ENCODE measurements at regions of chr10 and their contacts with region 1.

Region 1: DNA sequence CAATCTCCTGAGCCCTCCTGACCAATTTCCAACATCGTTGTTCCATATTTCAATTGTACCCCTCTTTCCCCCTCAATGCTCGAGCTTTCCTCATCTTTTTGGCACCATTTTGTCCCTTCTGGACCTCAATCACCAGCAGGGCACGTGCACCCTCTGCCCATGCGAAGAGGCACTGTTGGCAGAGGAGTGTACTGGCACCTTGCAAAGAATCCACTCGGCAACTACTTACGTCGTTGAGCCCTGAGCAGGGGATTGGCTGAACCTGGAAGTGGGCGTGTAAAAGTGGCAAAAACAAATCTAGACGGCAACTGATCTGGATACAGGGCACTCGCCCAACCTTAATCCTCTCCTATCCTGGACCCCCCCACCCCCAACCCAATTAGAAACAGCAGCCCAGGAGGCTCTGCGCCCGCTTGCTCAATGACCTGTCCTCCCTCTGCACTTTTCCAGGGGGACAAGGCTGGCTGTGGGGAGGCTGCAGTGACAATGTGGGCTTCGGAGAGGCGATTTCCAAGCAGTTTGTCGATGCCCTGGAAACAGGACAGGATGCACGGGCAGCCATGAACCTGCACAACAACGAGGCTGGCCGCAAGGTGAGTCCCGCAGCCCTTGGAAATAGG is 18.8 kb downstream of the WNT8B start:
- DNase-seq: peak; percentile 96
- ATAC-seq: peak; percentile 98
- H3K4me3 Mint-ChIP-seq: peak overlapping the region; percentile 77
- H3K27ac Mint-ChIP-seq: no peak overlapping the region
- H3K4me1 Mint-ChIP-seq: peaks cover 10% of the 10 kb centered on the region
- H3K27me3 Mint-ChIP-seq: peaks cover 18% of the 10 kb centered on the region
- CTCF ChIP-seq: no peak

Region 2: GRCh38 chr10:100122780-100123179 is 358.8 kb before region 1 on chr10:
- CTCF ChIA-PET with region 1: no interaction called
- POLR2A ChIA-PET with region 1: no interaction called
- intact Hi-C with region 1: no loop called
- DNase-seq: no peak
- ATAC-seq: no peak
- H3K4me3 Mint-ChIP-seq: no peak overlapping the region
- H3K27ac Mint-ChIP-seq: no peak overlapping the region
- H3K4me1 Mint-ChIP-seq: peaks cover 7% of the 10 kb centered on the region
- H3K27me3 Mint-ChIP-seq: no peaks in the 10 kb centered on the region
- CTCF ChIP-seq: no peak

Region 3: DNA sequence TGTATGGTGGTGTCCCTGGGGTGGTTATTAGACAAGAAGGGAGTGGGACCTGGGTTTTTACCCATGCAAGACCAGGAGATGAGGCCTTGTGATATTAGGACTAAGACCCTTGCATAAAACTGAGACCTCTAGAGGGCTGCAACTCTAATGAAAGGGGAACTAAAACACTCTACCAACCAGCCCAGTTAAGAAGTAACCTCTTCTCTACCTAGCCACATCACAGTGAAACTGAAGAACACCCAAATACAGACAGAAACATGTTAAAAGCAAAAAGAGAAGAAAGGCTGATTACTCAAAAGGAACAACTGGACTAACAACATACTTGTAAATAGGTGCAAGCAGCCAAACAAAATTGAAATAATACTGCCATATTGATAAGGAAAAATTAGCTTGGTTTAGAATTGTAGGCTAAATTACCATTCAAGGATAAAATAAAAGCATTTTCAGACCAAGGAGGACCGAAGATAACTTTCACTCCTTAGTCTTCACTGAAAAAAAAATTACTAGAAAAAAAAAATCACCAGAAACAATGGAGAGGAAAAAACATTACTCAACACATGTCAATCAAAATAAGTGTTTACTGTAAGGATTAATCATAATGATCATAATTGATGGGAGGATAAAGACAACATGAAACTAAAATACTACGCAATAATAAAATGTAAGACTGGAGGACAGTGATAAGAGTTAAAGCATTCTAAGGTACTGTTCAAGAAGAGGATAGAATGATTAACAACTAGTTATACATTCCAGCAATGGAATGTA is 323.3 kb before region 1 on chr10:
- CTCF ChIA-PET with region 1: no interaction called
- POLR2A ChIA-PET with region 1: no interaction called
- intact Hi-C with region 1: no loop called
- DNase-seq: no peak
- ATAC-seq: no peak
- H3K4me3 Mint-ChIP-seq: no peak overlapping the region
- H3K27ac Mint-ChIP-seq: no peak overlapping the region
- H3K4me1 Mint-ChIP-seq: peaks cover 27% of the 10 kb centered on the region
- H3K27me3 Mint-ChIP-seq: no peaks in the 10 kb centered on the region
- CTCF ChIP-seq: no peak

Region 4: DNA sequence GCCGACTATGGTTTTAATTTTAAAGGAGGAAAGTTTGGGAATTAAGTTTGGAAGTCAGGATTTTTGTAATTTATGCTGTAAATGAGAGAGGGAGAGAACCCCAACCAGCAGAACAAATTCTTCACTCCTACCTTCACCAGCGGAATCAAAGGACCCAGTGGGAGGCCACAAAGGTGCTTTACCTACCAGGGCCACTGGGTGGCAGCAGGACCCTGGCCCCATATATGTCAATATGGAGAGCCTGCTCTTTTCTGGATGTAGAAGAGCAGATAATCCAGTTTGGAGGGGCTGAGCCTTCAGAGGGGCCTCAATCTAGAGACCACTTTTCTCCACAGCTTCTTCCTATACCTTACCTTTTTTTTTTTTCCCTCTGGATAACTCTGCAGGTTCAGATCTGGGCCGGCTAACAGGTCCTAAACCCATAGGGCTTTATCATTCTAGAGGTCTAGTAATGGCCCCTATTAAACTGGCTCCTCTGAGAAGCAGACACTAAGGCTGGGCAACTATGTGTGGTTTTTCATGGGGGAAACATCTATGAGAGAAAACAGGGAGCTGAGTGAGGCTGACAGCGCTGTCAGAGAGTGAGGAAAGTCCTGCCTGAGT is 143.0 kb before region 1 on chr10:
- CTCF ChIA-PET with region 1: interaction called, 10 read pairs
- POLR2A ChIA-PET with region 1: no interaction called
- intact Hi-C with region 1: no loop called
- DNase-seq: peak; percentile 90
- ATAC-seq: peak; percentile 92
- H3K4me3 Mint-ChIP-seq: no peak overlapping the region
- H3K27ac Mint-ChIP-seq: peak overlapping the region; percentile 44
- H3K4me1 Mint-ChIP-seq: peaks cover 2% of the 10 kb centered on the region
- H3K27me3 Mint-ChIP-seq: peaks cover 1% of the 10 kb centered on the region
- CTCF ChIP-seq: peak; percentile 91

Region 5: GRCh38 chr10:100438674-100439315 is 42.8 kb before region 1 on chr10:
- CTCF ChIA-PET with region 1: interaction called, 25 read pairs
- POLR2A ChIA-PET with region 1: no interaction called
- intact Hi-C with region 1: no loop called
- DNase-seq: no peak
- ATAC-seq: no peak
- H3K4me3 Mint-ChIP-seq: no peak overlapping the region
- H3K27ac Mint-ChIP-seq: no peak overlapping the region
- H3K4me1 Mint-ChIP-seq: peaks cover 2% of the 10 kb centered on the region
- H3K27me3 Mint-ChIP-seq: no peaks in the 10 kb centered on the region
- CTCF ChIP-seq: no peak

Region 6: DNA sequence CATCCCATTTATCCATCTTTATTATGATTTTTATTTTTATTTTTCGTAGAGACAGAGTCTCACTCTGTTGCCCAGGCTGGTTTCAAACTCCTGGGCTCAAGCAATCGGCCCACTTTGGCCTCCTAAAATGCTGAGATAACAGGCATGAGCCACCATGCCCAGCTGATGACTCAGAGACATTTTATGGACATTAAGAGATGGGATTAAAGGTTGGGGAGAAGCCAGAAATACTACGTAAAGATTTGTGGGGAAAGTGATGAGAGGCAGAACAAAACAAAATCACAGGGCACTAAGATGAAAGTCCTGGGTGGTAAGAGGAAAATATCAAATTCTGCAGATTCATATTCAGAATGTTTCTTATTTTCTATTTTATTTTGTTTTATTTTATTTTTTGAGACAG is 11.2 kb before region 1 on chr10:
- CTCF ChIA-PET with region 1: interaction called, 30 read pairs
- POLR2A ChIA-PET with region 1: no interaction called
- intact Hi-C with region 1: no loop called
- DNase-seq: no peak
- ATAC-seq: no peak
- H3K4me3 Mint-ChIP-seq: no peak overlapping the region
- H3K27ac Mint-ChIP-seq: no peak overlapping the region
- H3K4me1 Mint-ChIP-seq: no peaks in the 10 kb centered on the region
- H3K27me3 Mint-ChIP-seq: peaks cover 3% of the 10 kb centered on the region
- CTCF ChIP-seq: no peak

Region 7: DNA sequence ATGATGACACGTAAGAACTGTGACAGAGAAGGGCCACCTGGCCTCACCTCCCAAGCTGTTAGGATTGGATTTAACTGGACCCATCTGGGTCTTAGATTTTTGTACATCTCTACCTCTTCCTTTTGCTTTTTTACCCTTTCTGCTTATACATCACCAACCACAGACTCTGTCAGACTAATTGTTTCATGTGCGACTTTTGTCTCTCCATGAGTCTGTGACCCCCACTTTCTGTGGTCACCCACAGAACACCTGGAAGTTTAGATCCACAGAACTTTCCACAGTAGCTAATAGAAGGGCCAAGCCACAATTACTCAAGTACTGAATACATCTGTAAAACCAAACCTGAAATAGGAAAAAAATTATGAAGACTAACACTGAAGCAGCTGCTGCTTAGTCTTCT is 15.0 kb after region 1 on chr10:
- CTCF ChIA-PET with region 1: interaction called, 132 read pairs
- POLR2A ChIA-PET with region 1: interaction called, 56 read pairs
- intact Hi-C with region 1: no loop called
- DNase-seq: peak; percentile 50
- ATAC-seq: peak; percentile 60
- H3K4me3 Mint-ChIP-seq: no peak overlapping the region
- H3K27ac Mint-ChIP-seq: peak overlapping the region; percentile 23
- H3K4me1 Mint-ChIP-seq: peaks cover 17% of the 10 kb centered on the region
- H3K27me3 Mint-ChIP-seq: no peaks in the 10 kb centered on the region
- CTCF ChIP-seq: no peak

Region 8: GRCh38 chr10:100502926-100503494 is 21.4 kb after region 1 on chr10:
- CTCF ChIA-PET with region 1: interaction called, 185 read pairs
- POLR2A ChIA-PET with region 1: interaction called, 56 read pairs
- intact Hi-C with region 1: loop called (anchors 2 kb)
- DNase-seq: no peak
- ATAC-seq: no peak
- H3K4me3 Mint-ChIP-seq: no peak overlapping the region
- H3K27ac Mint-ChIP-seq: no peak overlapping the region
- H3K4me1 Mint-ChIP-seq: peaks cover 25% of the 10 kb centered on the region
- H3K27me3 Mint-ChIP-seq: no peaks in the 10 kb centered on the region
- CTCF ChIP-seq: no peak

Region 9: GRCh38 chr10:100529475-100530298 is 48.1 kb after region 1 on chr10 and contains the start of gene NDUFB8:
- CTCF ChIA-PET with region 1: interaction called, 29 read pairs
- POLR2A ChIA-PET with region 1: interaction called, 3 read pairs
- intact Hi-C with region 1: no loop called
- DNase-seq: peak; percentile 92
- ATAC-seq: peak; percentile 72
- H3K4me3 Mint-ChIP-seq: peak within 1 kb of the TSS; percentile 85
- H3K27ac Mint-ChIP-seq: peak within 1 kb of the TSS; percentile 95
- H3K4me1 Mint-ChIP-seq: peaks cover 32% of the 10 kb centered on the region
- H3K27me3 Mint-ChIP-seq: no peaks in the 10 kb centered on the region
- CTCF ChIP-seq: no peak
- total RNA-seq, gene NDUFB8: 365 to 384 TPM

Region 10: GRCh38 chr10:100653957-100654781 is 172.6 kb after region 1 on chr10:
- CTCF ChIA-PET with region 1: no interaction called
- POLR2A ChIA-PET with region 1: no interaction called
- intact Hi-C with region 1: no loop called
- DNase-seq: peak; percentile 70
- ATAC-seq: peak; percentile 59
- H3K4me3 Mint-ChIP-seq: peak overlapping the region; percentile 68
- H3K27ac Mint-ChIP-seq: no peak overlapping the region
- H3K4me1 Mint-ChIP-seq: peaks cover 26% of the 10 kb centered on the region
- H3K27me3 Mint-ChIP-seq: peaks cover 63% of the 10 kb centered on the region
- CTCF ChIP-seq: no peak

Measured in activated CD8-positive, alpha-beta T cell treated with anti-CD3 and anti-CD28 coated beads for 36 hours (primary cell).